ENCODE measurements at regions of chr22 and their contacts with region 1.

Region 1: DNA sequence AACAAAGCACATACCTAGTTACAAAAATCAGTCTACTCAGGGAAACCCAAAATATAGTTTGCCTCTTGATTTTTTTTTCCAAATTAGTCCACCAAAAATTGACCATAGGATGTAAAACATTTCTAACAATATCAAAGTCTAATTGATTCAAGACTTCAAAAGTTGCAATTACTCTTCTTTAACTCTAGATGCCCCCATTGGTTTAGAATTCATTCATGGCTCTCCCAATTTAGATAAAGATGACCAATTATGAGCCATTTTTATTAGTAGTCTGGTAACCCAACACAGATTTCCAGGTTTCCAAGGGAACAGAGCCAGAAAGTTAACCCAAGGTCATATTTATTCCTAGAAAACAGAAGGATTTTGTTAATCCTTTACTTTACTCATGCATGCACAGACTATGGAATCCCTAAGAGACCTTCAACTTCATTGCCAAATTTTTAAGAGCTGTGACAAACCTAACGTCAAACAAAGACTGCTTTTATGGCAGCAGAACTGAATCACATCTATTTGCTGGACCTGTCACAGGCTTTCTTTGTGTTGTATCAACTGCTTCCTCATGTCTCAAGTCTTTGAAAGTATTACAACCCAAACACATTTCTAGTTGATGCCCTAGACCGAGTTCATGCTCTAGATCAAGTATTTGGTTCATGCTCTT is 55.3 kb downstream of the C22orf42 start:
- DNase-seq: no peak
- H3K4me3 Mint-ChIP-seq: no peak overlapping the region
- H3K27ac Mint-ChIP-seq: no peak overlapping the region
- H3K4me1 Mint-ChIP-seq: no peaks in the 10 kb centered on the region
- H3K27me3 Mint-ChIP-seq: peaks cover 14% of the 10 kb centered on the region

Region 2: GRCh38 chr22:32265882-32266767 is 162.3 kb after region 1 on chr22:
- intact Hi-C with region 1: loop called (anchors 10 kb)
- DNase-seq: peak; percentile 55
- H3K4me3 Mint-ChIP-seq: no peak overlapping the region
- H3K27ac Mint-ChIP-seq: no peak overlapping the region
- H3K4me1 Mint-ChIP-seq: peaks cover 6% of the 10 kb centered on the region
- H3K27me3 Mint-ChIP-seq: no peaks in the 10 kb centered on the region